ENCODE measurements at regions of chr10 and their contacts with region 1.

Region 1: GRCh38 chr10:48981310-48981907 is 41.8 kb upstream of the LRRC18 start:
- DNase-seq: peak; percentile 64 to 76
- ATAC-seq: peak; percentile 89 to 95 (median 90)
- H3K4me3 ChIP-seq: no peak overlapping the region
- H3K27ac ChIP-seq: no peak overlapping the region
- H3K4me1 ChIP-seq: no peaks in the 10 kb centered on the region
- H3K27me3 ChIP-seq: no peaks in the 10 kb centered on the region
- CTCF ChIP-seq: peak; percentile 84

Region 2: GRCh38 chr10:48993627-48994026 is 12.2 kb after region 1 on chr10:
- intact Hi-C with region 1: no loop called
- DNase-seq: no peak
- ATAC-seq: no peak
- H3K4me3 ChIP-seq: no peak overlapping the region
- H3K27ac ChIP-seq: no peak overlapping the region
- H3K4me1 ChIP-seq: no peaks in the 10 kb centered on the region
- H3K27me3 ChIP-seq: no peaks in the 10 kb centered on the region
- CTCF ChIP-seq: no peak

Region 3: DNA sequence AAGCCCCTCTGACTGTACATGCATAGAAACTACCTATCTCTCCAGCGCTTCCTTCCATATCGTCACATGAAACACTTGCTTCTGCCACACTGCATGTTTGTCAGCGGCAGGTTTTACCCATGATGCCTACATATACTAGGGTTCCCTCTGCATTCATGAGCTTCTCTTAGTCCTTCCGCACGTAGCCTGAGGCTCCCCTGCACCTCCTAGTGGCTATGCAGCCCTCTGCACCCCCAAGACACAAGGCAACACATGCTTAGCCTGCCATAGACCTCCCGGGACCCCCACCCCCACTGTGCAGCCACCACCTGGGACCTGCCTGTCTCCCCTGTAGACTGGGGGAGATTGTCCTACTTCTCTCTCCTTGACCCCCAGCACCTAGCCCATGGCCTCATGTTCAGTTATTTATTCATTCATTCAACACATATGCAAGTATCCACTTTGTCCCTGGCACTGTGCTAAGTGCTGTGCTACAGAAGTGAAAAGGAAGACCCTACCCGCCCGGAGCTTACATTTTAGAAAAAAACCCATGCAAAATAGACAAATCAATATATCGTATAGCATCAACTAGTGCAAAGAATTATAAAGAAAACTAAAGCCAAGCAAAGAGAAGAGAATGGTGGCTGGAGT is 183.3 kb after region 1 on chr10:
- intact Hi-C with region 1: loop called (anchors 5 kb)
- DNase-seq: no peak
- ATAC-seq: peak in 3 of 4 donors; percentile 28 to 71 (median 59)
- H3K4me3 ChIP-seq: no peak overlapping the region
- H3K27ac ChIP-seq: no peak overlapping the region
- H3K4me1 ChIP-seq: no peaks in the 10 kb centered on the region
- H3K27me3 ChIP-seq: no peaks in the 10 kb centered on the region
- CTCF ChIP-seq: peak; percentile 45

Region 4: GRCh38 chr10:49407552-49408137 is 426.2 kb after region 1 on chr10:
- intact Hi-C with region 1: loop called in 1 of 2 experiments (anchors 10 kb)
- DNase-seq: peak; percentile 73 to 84
- ATAC-seq: peak; percentile 83 to 94 (median 88)
- H3K4me3 ChIP-seq: no peak overlapping the region
- H3K27ac ChIP-seq: no peak overlapping the region
- H3K4me1 ChIP-seq: no peaks in the 10 kb centered on the region
- H3K27me3 ChIP-seq: peaks cover 0 to 7% (median 2%) of the 10 kb centered on the region in 3 donors
- CTCF ChIP-seq: peak; percentile 80